Activated naive CD4-positive, alpha-beta T cell treated with anti-CD3 and anti-CD28 coated beads, Interleukin-2, amount 10 ng/mL, durations not matched to agents 7 days and 5 days (primary cell): ENCODE measurements at regions of chr11 and their contacts with region 1.

Region 1: DNA sequence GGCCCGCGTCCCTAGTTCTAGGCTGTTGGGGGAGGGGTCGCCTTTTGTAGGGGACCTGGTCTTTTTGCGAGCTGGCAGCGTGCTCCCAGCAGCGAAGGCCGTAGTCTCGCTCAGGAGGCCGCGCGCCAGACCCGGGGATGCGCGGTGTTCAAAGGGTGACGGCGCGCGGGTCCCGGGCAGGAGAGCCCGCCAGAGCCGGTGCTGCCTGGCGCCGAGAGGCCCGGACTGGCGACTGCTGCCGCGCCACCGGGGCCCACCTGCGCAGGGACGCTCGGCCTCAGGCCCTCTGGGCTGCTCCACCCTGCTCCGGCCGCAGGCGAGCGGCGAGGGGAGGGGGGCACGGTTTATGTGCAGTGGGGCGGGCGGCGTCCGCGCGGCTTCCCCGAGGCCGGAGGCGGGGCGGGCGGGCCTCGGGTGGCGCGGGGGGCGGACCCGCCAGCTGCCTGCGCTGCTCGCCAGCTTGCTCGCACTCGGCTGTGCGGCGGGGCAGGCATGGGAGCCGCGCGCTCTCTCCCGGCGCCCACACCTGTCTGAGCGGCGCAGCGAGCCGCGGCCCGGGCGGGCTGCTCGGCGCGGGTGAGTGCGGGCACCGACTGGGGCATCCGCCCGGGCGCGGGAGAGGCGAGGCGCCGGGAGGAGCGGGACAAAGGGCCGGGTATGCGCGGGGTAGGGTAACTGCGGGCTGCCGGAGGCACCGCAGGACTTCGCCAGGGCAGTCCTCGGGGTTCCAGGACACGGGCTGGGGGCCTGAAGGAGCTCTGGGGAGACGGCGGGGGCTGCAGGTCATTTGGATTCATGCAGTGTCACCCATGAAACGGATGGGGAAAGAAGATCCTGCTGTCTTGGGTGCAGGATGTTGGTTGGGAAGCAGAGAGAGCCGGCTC is at the start of gene PRSS23:
- DNase-seq: peak; percentile 49
- H3K4me3 Mint-ChIP-seq: peak within 1 kb of the TSS; percentile 68
- H3K27ac Mint-ChIP-seq: no peak within 1 kb of the TSS
- H3K4me1 Mint-ChIP-seq: peaks cover 28% of the 10 kb centered on the region
- H3K27me3 Mint-ChIP-seq: peaks cover 53% of the 10 kb centered on the region

Region 2: DNA sequence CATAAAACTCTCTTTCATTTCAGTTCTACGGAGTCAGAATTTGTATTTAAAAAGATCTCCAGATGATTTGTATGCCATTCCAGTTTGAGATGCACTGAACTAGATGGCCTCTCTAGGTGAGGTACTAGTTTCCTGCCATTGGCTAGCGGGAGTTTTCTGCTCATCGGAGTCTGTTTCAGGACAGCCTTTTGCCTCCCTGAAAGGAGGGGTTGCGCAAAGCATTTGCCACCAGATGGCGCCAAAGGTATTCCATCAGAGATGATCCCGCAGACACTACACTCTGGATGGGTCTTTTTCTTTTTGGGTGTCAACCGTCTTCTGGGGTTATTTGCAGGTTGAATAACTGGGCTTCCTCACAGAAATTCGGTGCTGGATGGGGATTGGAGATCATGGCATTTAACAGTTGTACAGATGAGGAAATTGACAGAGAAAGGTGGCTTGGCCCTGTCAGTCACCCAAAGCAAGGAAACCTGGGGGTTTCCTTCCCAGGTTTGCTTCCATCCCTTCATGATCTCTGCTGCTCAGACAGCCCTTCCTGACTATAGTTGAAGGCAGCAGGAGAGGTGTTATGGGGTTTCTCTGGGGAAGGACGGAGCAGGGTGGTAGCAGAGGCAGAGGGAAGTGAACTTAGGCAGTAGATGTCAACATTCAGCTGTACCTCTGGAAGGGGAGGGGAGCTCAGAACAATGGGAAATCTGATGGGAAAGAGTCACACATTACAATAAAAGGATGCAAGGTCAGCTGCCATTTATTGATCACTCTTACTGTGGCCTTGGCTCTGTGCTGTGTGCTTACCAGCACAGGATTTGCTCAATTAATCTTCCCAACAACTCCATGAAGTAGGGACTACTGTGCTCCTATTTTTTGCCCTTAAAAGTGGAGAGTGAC is 344.0 kb before region 1 on chr11:
- CTCF ChIA-PET with region 1: interaction called, 14 read pairs
- DNase-seq: peak; percentile 85
- H3K4me3 Mint-ChIP-seq: no peak overlapping the region
- H3K27ac Mint-ChIP-seq: no peak overlapping the region
- H3K4me1 Mint-ChIP-seq: no peaks in the 10 kb centered on the region
- H3K27me3 Mint-ChIP-seq: no peaks in the 10 kb centered on the region

Region 3: GRCh38 chr11:86910592-86910991 is 110.3 kb after region 1 on chr11:
- CTCF ChIA-PET with region 1: no interaction called
- DNase-seq: no peak
- H3K4me3 Mint-ChIP-seq: no peak overlapping the region
- H3K27ac Mint-ChIP-seq: no peak overlapping the region
- H3K4me1 Mint-ChIP-seq: no peaks in the 10 kb centered on the region
- H3K27me3 Mint-ChIP-seq: peaks cover 23% of the 10 kb centered on the region